Natural killer cell (primary cell): ENCODE measurements at regions of chrX and their contacts with region 1.

Region 1: DNA sequence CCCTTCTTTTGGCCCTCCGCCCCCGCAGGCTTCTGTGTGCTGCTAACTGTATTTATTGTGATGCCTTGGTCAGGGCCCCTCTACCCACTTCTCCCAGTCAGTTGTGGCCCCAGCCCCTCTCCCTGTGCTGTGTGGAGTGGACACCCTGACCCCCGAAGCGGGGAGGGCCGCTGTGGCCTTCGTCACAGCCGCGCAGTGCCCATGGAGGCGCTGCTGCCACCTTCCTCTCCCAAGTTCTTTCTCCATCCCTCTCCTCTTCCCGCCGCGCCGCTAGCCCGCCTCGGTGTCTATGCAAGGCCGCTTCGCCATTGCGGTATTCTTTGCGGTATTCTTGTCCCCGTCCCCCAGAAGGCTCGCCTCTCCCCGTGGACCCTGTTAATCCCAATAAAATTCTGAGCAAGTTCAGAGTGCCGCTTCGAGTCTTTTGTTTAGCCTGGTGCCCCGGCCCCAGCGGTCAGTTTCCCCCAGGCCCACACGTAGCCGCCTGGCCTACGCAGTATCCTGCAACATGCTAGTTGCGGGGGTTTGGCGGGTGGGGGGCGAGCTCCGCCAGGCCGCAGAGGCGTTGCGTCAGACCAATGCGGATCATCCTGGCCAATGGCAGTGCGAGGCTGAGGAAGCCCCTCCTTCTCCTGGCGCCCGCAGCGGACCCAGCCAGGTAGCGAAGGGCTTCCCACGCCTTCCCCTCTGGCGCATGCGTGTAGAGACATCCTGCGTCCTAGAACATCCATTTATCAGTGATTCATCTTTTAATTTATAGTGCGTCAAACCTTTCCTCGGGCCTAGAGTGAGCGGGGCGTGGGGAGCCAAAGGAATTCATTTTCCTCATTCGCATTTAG is 5.6 kb upstream of the KANTR start:
- DNase-seq: peak; percentile 57 to 92
- ATAC-seq: peak; percentile 38 to 60 (median 58)
- H3K4me3 ChIP-seq: peak overlapping the region; percentile 37
- H3K4me3 Mint-ChIP-seq: peak overlapping the region; percentile 91
- H3K27ac ChIP-seq: peak overlapping the region; percentile 77
- H3K27ac Mint-ChIP-seq: peak overlapping the region; percentile 87 to 92
- H3K4me1 ChIP-seq: peaks cover 17% of the 10 kb centered on the region
- H3K4me1 Mint-ChIP-seq: peaks cover 14 to 34% of the 10 kb centered on the region in 2 donors
- H3K27me3 ChIP-seq: no peaks in the 10 kb centered on the region
- H3K27me3 Mint-ChIP-seq: no peaks in the 10 kb centered on the region
- CTCF ChIP-seq: no peak

Region 2: GRCh38 chrX:53071604-53072417 is 16.5 kb before region 1 on chrX:
- intact Hi-C with region 1: loop called (anchors 1 kb)
- DNase-seq: peak in 1 of 2 donors; percentile 90
- ATAC-seq: peak; percentile 77 to 89 (median 88)
- H3K4me3 ChIP-seq: peak overlapping the region; percentile 49
- H3K4me3 Mint-ChIP-seq: peak overlapping the region; percentile 64
- H3K27ac ChIP-seq: peak overlapping the region; percentile 21
- H3K27ac Mint-ChIP-seq: peak overlapping the region in 1 of 2 donors; percentile 74
- H3K4me1 ChIP-seq: peaks cover 10% of the 10 kb centered on the region
- H3K4me1 Mint-ChIP-seq: peaks cover 12 to 21% of the 10 kb centered on the region in 2 donors
- H3K27me3 ChIP-seq: no peaks in the 10 kb centered on the region
- H3K27me3 Mint-ChIP-seq: peaks cover 0 to 5% of the 10 kb centered on the region in 2 donors
- CTCF ChIP-seq: peak; percentile 59

Region 3: DNA sequence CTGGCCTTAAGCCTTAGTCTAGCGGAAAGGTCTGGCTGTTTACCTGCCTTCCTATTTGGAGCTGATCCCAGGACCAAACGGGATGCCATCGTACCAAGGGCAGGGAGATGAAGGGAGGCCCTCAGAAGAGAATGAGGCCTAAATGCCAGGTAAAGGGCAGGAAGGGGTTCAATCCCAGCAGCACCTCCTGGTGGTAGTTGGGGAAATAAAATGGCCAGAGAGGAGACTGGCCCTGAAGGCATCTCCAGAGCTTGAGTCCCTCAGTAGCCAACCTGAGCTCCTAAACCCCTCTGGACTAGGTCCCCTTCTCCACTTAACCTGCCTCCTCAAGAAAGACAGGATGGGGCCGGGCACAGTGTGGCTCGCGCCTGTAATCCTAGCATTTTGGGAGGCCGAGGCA is 83.0 kb after region 1 on chrX:
- intact Hi-C with region 1: no loop called
- DNase-seq: no peak
- ATAC-seq: no peak
- H3K4me3 ChIP-seq: no peak overlapping the region
- H3K4me3 Mint-ChIP-seq: no peak overlapping the region
- H3K27ac ChIP-seq: no peak overlapping the region
- H3K27ac Mint-ChIP-seq: no peak overlapping the region
- H3K4me1 ChIP-seq: no peaks in the 10 kb centered on the region
- H3K4me1 Mint-ChIP-seq: no peaks in the 10 kb centered on the region
- H3K27me3 ChIP-seq: no peaks in the 10 kb centered on the region
- H3K27me3 Mint-ChIP-seq: no peaks in the 10 kb centered on the region
- CTCF ChIP-seq: no peak

Region 4: DNA sequence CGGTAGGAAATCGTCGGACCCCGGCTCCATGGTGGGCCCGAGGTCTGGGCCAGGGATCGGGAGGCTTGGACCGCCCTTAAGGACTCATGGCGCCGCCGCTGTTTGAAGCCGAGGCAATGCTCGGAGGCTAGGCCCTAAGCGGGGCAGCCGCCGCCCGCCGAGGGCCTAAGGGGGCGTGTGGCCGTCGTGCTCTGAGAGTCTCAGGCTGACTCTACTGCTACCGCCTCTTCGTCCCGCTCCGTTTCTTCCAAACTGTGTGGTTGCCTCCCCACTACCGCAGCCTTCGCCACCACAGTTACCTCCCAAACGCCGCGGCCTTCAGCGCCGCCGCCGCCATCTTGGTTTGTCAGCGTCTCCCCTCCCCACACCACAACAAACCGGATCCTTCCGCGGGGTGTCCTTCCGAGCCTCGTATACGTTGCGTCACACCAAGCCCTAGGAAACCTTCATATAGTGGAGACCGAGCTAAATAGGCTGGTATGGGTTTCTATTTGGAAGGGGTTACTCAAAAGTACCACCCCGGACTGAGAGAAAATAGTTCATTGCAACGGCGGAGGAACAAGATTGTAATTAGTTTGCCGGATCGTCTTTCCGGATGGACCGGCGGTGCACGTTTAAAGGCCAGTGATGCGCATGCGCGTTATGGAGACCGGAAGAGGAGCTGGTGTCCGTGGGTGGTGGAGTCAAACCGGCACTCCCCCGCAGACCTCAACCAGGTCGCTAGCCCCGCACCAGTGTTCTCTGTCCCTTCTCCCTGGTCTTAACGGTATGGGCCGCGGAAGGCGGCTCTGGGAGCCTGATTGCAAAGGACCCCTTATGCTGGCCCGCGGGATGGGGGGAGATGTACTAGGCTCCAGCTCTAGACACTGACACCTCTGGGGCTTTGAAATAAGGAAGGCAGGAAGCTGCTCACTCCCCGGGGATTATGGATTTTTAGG is 136.8 kb after region 1 on chrX and contains the start of gene KDM5C:
- intact Hi-C with region 1: loop called (anchors 5 kb)
- DNase-seq: peak; percentile 78 to 94
- ATAC-seq: peak; percentile 86 to 92 (median 88)
- H3K4me3 ChIP-seq: peak within 1 kb of the TSS; percentile 100
- H3K4me3 Mint-ChIP-seq: peak within 1 kb of the TSS; percentile 95
- H3K27ac ChIP-seq: peak within 1 kb of the TSS; percentile 94
- H3K27ac Mint-ChIP-seq: peak within 1 kb of the TSS; percentile 97 to 98
- H3K4me1 ChIP-seq: peaks cover 30% of the 10 kb centered on the region
- H3K4me1 Mint-ChIP-seq: peaks cover 28 to 51% of the 10 kb centered on the region in 2 donors
- H3K27me3 ChIP-seq: no peaks in the 10 kb centered on the region
- H3K27me3 Mint-ChIP-seq: peaks cover 0 to under 1% of the 10 kb centered on the region in 2 donors
- CTCF ChIP-seq: no peak
- total RNA-seq, gene KDM5C: 191 to 307 (median 196) TPM